Mammary epithelial cell (primary cell): ENCODE measurements at regions of chr11 and their contacts with region 1.

Region 1: GRCh38 chr11:86456052-86456939 is 81.6 kb downstream of the CCDC81 start:
- DNase-seq: peak; percentile 64
- H3K4me3 ChIP-seq: no peak overlapping the region
- H3K27ac ChIP-seq: no peak overlapping the region
- H3K4me1 ChIP-seq: peaks cover 32% of the 10 kb centered on the region
- H3K27me3 ChIP-seq: no peaks in the 10 kb centered on the region
- CTCF ChIP-seq: peak; percentile 85 to 90

Region 2: GRCh38 chr11:86360775-86361395 is 95.4 kb before region 1 on chr11:
- CTCF ChIA-PET with region 1: no interaction called
- dilution Hi-C with region 1: no loop called
- in situ Hi-C with region 1: no loop called
- intact Hi-C with region 1: loop called (anchors 1 kb)
- DNase-seq: peak; percentile 31
- H3K4me3 ChIP-seq: no peak overlapping the region
- H3K27ac ChIP-seq: no peak overlapping the region
- H3K4me1 ChIP-seq: no peaks in the 10 kb centered on the region
- H3K27me3 ChIP-seq: no peaks in the 10 kb centered on the region
- CTCF ChIP-seq: peak; percentile 33 to 64

Region 3: GRCh38 chr11:86608251-86608799 is 152.0 kb after region 1 on chr11:
- CTCF ChIA-PET with region 1: no interaction called
- dilution Hi-C with region 1: no loop called
- in situ Hi-C with region 1: loop called in 1 of 2 experiments (anchors 25 kb)
- intact Hi-C with region 1: loop called (anchors 1 kb)
- DNase-seq: peak; percentile 72
- H3K4me3 ChIP-seq: no peak overlapping the region
- H3K27ac ChIP-seq: no peak overlapping the region
- H3K4me1 ChIP-seq: peaks cover 22% of the 10 kb centered on the region
- H3K27me3 ChIP-seq: no peaks in the 10 kb centered on the region
- CTCF ChIP-seq: peak; percentile 89 to 91

Region 4: DNA sequence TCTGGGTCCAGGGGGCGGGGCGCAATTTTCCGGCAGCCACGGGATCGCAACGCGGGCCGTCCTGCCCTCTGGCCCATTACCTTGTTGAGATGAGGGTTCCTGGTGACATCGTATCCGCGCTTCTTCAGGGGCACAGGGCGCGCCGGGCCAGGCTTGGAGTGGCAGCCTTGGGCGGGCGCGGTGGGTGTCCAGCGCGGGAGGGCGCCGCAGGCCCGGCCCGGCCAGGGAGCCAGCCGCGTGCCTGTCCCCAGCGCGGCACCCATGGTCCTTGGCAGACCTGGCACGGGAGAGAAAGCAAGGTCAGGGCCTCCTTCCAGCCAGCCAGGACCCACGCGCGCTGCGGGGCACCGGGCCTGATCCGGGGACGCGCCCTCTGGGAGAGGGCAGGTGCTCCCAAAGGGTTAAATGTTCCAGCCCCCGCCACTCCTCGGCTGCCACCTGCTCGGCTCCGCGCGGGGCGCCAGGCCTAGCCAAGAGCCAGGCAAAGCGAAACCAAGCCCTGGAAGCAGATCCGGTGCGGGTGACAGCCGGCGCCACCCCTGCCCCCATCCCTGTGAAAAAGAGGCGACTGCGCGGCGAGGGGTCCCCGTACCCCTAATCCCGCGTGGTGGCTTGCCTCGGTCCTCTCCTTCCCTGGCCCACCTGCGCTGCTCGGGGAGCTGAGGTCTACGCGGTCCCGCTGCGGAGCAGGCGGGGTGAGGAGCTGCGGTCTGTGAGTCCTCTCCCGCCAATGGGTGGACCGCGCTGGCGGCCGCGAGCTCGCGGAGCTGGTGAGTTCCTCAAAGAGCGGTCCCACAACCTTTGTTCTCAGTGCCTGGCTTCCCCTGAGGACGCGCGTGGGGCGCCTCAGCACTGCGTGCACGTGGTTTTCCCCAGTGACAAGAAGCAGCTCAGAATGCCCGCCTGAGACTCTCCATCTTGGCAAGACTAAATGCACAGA is 215.7 kb after region 1 on chr11 and contains the start of gene ME3:
- CTCF ChIA-PET with region 1: no interaction called
- dilution Hi-C with region 1: no loop called
- in situ Hi-C with region 1: no loop called
- intact Hi-C with region 1: loop called (anchors 5 kb)
- DNase-seq: no peak
- H3K4me3 ChIP-seq: peak within 1 kb of the TSS; percentile 28 to 56 (median 52)
- H3K27ac ChIP-seq: peak within 1 kb of the TSS; percentile 14
- H3K4me1 ChIP-seq: peaks cover 28% of the 10 kb centered on the region
- H3K27me3 ChIP-seq: no peaks in the 10 kb centered on the region
- CTCF ChIP-seq: no peak
- total RNA-seq, gene ME3: 11.2 TPM in 1 of 2 donors, not detected in the other

Region 5: DNA sequence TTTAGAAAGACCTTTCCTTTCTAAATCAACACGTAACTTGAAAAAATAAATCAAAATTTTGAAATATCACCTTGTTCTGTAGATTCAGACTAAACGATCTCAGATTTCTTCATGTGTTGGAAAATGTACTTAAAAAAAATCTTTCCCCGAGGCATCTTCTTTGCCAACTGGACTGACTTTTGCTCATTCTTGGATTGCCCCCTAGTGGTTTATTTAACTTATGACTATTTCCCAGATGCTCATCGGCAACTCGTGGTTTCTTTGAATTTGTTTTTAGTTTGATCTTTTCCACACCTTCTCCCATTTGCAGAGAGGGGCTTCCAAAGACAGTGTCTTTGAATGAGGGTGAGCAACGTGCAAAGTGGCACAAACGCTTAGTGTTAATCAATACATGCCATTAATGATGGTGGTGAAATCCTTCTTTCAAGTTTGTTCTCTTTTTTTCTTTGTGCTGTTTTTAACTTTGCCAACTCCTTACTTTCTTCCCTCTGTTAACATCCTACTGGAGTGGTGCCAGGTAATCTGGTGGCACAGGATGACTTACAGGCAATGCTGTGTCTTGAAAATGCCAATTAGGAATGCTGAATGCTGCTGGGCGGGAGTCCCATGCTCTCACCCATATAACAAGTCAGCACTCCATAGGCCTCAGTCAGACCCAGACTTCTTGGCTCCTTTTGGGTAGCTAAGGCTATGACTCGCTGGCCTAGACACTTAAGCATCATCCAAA is 362.3 kb after region 1 on chr11:
- CTCF ChIA-PET with region 1: interaction called, 3 read pairs
- dilution Hi-C with region 1: loop called (anchors 25 kb)
- in situ Hi-C with region 1: loop called (anchors 5 kb)
- intact Hi-C with region 1: loop called (anchors 1 kb)
- DNase-seq: peak; percentile 50
- H3K4me3 ChIP-seq: no peak overlapping the region
- H3K27ac ChIP-seq: no peak overlapping the region
- H3K4me1 ChIP-seq: peaks cover 39% of the 10 kb centered on the region
- H3K27me3 ChIP-seq: no peaks in the 10 kb centered on the region
- CTCF ChIP-seq: peak; percentile 59 to 60

Region 6: GRCh38 chr11:86938900-86939880 is 482.9 kb after region 1 on chr11:
- CTCF ChIA-PET with region 1: no interaction called
- dilution Hi-C with region 1: no loop called
- in situ Hi-C with region 1: no loop called
- intact Hi-C with region 1: loop called (anchors 5 kb)
- DNase-seq: peak; percentile 31
- H3K4me3 ChIP-seq: no peak overlapping the region
- H3K27ac ChIP-seq: no peak overlapping the region
- H3K4me1 ChIP-seq: no peaks in the 10 kb centered on the region
- H3K27me3 ChIP-seq: no peaks in the 10 kb centered on the region
- CTCF ChIP-seq: peak; percentile 59 to 60